ENCODE measurements at regions of chr13 and their contacts with region 1.

Region 1: GRCh38 chr13:113562085-113562749 is 22.3 kb upstream of the TFDP1 start:
- DNase-seq: peak; percentile 22
- H3K4me3 ChIP-seq: no peak overlapping the region
- H3K27ac ChIP-seq: no peak overlapping the region
- H3K4me1 ChIP-seq: no peaks in the 10 kb centered on the region
- H3K27me3 ChIP-seq: no peaks in the 10 kb centered on the region
- CTCF ChIP-seq: peak; percentile 71 to 80

Region 2: DNA sequence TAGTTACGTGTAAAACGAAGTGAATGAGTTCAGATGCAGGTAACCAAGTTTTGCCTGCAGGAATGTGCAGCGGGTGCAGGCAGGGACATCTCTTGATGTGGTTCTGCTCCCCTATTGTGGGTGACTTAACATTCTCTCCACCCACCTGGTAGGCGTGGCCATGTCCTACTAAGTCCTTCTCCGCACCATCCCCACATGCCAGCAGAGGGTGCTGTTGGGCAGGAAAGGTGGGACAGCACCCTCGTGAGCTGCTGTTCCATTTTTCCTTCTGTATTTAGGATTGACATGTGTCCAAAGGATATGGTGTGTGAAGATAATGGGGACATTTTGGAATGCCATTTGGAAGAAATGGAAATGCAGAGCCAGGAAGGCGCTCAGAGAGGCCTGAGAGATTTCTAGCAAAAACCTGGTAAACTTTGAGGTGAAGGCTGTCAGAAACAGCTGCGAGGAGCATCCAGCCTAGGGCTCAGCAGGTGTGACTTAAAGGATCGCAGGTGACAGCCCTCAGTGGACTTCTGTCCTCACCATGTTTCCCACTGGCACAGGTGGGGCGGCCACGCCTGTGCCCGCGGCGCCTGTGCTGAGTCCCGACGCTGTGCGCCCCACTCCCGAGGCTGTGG is 619.4 kb before region 1 on chr13:
- CTCF ChIA-PET with region 1: no interaction called
- dilution Hi-C with region 1: no loop called
- in situ Hi-C with region 1: no loop called
- intact Hi-C with region 1: loop called (anchors 1 kb)
- DNase-seq: peak; percentile 84
- H3K4me3 ChIP-seq: peak overlapping the region; percentile 43 to 52 (median 49)
- H3K27ac ChIP-seq: no peak overlapping the region
- H3K4me1 ChIP-seq: peaks cover 20% of the 10 kb centered on the region
- H3K27me3 ChIP-seq: peaks cover 4% of the 10 kb centered on the region
- CTCF ChIP-seq: peak; percentile 97 to 99

Region 3: GRCh38 chr13:113393563-113394338 is 168.5 kb before region 1 on chr13:
- CTCF ChIA-PET with region 1: no interaction called
- dilution Hi-C with region 1: no loop called
- in situ Hi-C with region 1: no loop called
- intact Hi-C with region 1: loop called (anchors 5 kb)
- DNase-seq: peak; percentile 54
- H3K4me3 ChIP-seq: peak overlapping the region; percentile 39 to 58 (median 57)
- H3K27ac ChIP-seq: no peak overlapping the region
- H3K4me1 ChIP-seq: peaks cover 12% of the 10 kb centered on the region
- H3K27me3 ChIP-seq: peaks cover under 1% of the 10 kb centered on the region
- CTCF ChIP-seq: peak; percentile 45 to 62

Region 4: GRCh38 chr13:113490496-113491417 is 71.5 kb before region 1 on chr13 and contains the start of gene DCUN1D2:
- CTCF ChIA-PET with region 1: interaction called, 4 read pairs
- dilution Hi-C with region 1: no loop called
- in situ Hi-C with region 1: no loop called
- intact Hi-C with region 1: loop called (anchors 5 kb)
- DNase-seq: peak; percentile 96
- H3K4me3 ChIP-seq: peak within 1 kb of the TSS; percentile 78 to 87 (median 79)
- H3K27ac ChIP-seq: peak within 1 kb of the TSS; percentile 69
- H3K4me1 ChIP-seq: peaks cover 35% of the 10 kb centered on the region
- H3K27me3 ChIP-seq: no peaks in the 10 kb centered on the region
- CTCF ChIP-seq: no peak
- total RNA-seq, gene DCUN1D2: 11.3 to 21.6 TPM

Region 5: DNA sequence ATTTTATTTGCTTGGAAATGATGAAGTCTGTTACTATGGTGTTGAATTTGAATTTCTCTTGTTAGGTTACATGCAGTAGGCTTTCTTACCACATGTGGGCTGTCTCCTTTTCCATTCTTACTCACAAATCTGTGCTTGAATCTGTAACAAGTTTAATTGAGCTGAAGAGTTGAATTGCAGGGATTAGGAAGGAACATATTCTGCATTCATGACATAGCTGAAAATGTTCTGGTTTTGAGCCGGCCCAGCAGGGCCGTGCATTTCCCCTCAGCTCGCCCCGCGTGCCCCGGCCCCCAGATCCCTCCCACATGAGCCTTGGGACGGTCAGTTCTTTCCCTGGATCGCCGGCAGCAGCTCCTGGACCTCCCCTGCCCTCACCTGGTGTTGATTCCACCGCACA is 50.4 kb after region 1 on chr13:
- CTCF ChIA-PET with region 1: no interaction called
- dilution Hi-C with region 1: loop called (anchors 5 kb)
- in situ Hi-C with region 1: no loop called
- intact Hi-C with region 1: no loop called
- DNase-seq: no peak
- H3K4me3 ChIP-seq: no peak overlapping the region
- H3K27ac ChIP-seq: no peak overlapping the region
- H3K4me1 ChIP-seq: no peaks in the 10 kb centered on the region
- H3K27me3 ChIP-seq: no peaks in the 10 kb centered on the region
- CTCF ChIP-seq: no peak